ENCODE measurements at regions of chr11 and their contacts with region 1.

Region 1: DNA sequence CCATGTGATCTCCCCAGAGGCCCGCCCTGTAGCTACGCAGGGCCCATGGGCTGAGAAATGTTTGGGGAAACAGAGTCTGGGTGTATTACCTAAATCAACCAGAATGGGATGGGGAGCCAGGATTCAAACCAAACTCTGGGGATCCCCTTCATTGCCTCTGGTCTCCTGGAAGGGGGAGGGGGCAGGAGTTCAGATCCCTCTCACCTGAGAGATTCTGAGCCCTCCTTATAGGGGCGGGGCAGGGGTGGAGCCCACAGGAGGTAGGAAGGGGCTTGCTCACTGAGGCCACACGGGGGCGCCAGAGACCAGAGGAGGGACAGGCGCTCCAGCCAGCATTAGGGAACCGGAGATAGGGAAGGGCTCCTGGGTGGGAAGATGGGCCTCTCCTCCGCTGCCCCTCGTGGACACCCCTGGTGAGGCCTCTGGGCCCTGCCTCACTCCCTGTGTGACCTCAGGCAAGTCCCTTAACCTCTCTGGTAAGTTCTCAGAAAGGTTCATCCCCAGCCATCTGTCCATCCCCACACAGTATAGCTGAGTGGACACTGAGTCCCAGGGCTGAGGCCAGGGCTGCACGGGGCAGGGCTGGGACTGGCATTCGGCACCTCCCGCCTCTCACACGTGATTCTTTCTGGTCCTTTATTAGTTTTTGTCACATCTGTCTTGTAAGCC is 2.7 kb upstream of the CDC42BPG start:
- DNase-seq: peak; percentile 89 to 95
- H3K4me3 ChIP-seq: no peak overlapping the region
- H3K27ac ChIP-seq: no peak overlapping the region
- H3K4me1 ChIP-seq: peaks cover 15 to 21% of the 10 kb centered on the region in 2 donors
- H3K27me3 ChIP-seq: no peaks in the 10 kb centered on the region
- CTCF ChIP-seq: peak; percentile 90 to 99 (median 98)
- POLR2A ChIP-seq: no peak

Region 2: GRCh38 chr11:64894070-64894796 is 47.1 kb after region 1 on chr11:
- intact Hi-C with region 1: loop called (anchors 2 kb)
- DNase-seq: peak; percentile 89
- H3K4me3 ChIP-seq: no peak overlapping the region
- H3K27ac ChIP-seq: no peak overlapping the region
- H3K4me1 ChIP-seq: peaks cover 0 to 3% of the 10 kb centered on the region in 2 donors
- H3K27me3 ChIP-seq: no peaks in the 10 kb centered on the region
- CTCF ChIP-seq: peak; percentile 61 to 91 (median 87)
- POLR2A ChIP-seq: no peak

Region 3: DNA sequence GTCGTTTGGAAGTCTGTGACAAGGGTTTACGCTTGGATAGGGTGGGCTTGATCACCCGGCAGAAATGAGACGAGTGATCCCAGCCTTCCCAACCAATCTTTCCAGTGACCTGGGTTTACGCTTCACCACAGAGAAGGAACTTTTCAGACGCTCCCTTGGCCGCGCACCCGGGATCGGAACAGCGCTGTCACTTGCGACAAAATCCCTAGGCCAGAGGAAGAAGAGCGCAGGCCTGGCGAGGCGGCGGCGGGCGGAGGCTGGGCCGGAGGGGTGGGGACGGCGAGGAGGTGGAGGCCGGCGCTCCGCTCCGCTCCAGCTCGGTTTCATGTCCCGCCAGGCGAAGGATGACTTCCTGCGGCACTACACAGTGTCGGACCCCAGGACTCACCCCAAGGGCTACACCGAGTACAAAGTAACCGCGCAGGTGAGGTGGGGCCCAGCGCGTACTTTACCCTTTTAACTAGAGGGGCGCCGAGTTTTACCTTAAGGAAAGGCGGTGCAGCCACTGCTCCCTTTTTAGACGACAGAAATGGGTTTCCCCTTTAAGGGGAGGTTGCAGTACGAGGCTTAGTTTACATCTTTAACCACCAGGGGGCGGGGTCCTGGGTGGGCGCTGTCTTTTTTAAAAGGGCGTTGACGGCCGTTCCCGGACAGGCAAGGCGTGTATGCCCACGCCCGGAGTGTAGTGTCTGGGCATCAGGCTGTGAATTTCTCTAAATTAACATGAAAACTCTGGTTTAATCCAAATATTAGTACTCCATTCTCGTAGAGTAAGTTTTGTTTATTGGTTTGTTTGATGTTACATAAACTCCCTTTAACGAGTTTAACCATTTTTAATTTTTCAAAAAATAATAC is 180.3 kb after region 1 on chr11 and contains the start of gene SNX15:
- intact Hi-C with region 1: loop called (anchors 10 kb)
- DNase-seq: peak; percentile 92 to 94
- H3K4me3 ChIP-seq: peak within 1 kb of the TSS; percentile 42 to 53 (median 45)
- H3K27ac ChIP-seq: peak within 1 kb of the TSS; percentile 74 to 90 (median 90)
- H3K4me1 ChIP-seq: peaks cover 8 to 12% of the 10 kb centered on the region in 2 donors
- H3K27me3 ChIP-seq: no peaks in the 10 kb centered on the region
- CTCF ChIP-seq: peak; percentile 45 to 90 (median 56)
- POLR2A ChIP-seq: peak in 1 of 2 donors; percentile 78
- total RNA-seq, gene SNX15: 11.6 to 36.4 (median 19.2) TPM